ENCODE measurements at regions of chr16 and their contacts with region 1.

Region 1: GRCh38 chr16:35449663-35450062 is 1990.3 kb downstream of the TP53TG3F start:
- DNase-seq: no peak
- H3K4me3 ChIP-seq: no peak overlapping the region
- H3K27ac ChIP-seq: no peak overlapping the region
- H3K27me3 ChIP-seq: no peaks in the 10 kb centered on the region
- CTCF ChIP-seq: no peak

Region 2: GRCh38 chr16:35221482-35222185 is 228.0 kb before region 1 on chr16:
- in situ Hi-C with region 1: no loop called
- DNase-seq: no peak
- H3K4me3 ChIP-seq: no peak overlapping the region
- H3K27ac ChIP-seq: no peak overlapping the region
- H3K27me3 ChIP-seq: no peaks in the 10 kb centered on the region
- CTCF ChIP-seq: no peak

Region 3: DNA sequence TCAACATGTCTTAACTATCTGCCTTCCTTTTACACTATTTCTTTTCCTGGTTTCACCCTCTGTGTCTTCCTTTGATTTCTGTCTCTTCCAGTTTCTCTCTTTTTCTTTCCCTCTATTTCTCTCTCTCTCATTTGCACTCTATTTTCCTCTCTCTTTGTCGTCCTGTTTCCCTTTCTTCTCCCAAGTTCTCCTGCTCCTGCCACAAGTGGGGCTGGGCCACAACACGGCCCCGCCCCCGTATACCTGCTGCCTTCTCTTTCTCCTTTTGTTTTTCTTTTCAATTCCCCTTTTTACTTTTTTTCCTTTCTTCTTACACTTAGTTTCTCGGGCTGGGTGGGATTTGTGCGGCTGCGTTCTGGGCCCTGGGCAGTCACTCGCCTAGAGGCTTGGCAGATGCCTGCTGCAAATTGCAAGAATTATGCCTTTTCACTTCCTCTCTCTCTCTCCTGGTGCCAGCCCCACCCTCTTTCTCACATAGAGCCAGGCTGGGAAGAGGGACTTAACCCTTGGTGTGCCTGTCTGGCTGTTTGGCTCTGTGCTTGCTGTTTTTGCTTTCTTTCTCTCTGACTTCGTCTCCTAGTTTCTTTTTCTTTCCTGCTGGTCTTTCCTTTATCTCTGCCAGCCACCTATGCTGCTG is 149.2 kb after region 1 on chr16:
- in situ Hi-C with region 1: loop called (anchors 25 kb)
- DNase-seq: no peak
- H3K4me3 ChIP-seq: no peak overlapping the region
- H3K27ac ChIP-seq: no peak overlapping the region
- H3K27me3 ChIP-seq: no peaks in the 10 kb centered on the region
- CTCF ChIP-seq: no peak

Region 4: DNA sequence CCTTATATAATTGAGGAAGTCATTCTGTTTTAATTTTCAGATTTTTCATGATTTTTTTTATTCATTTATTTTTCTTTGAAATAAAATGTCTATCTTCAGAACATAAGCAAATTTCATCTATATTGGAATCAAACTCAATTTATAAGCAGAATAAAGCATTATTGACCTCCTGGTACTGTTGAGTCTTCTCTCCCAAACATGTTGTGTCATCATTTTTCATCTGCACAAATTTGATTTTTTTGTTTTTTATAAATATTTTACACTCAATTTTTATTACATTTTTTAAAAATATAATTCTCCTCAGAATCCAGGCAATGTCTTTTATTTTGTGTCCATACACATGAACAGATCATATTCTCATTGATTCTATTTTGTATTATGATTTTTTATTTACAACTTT is 373.7 kb after region 1 on chr16:
- in situ Hi-C with region 1: no loop called
- DNase-seq: no peak
- H3K4me3 ChIP-seq: no peak overlapping the region
- H3K27ac ChIP-seq: no peak overlapping the region
- H3K27me3 ChIP-seq: no peaks in the 10 kb centered on the region
- CTCF ChIP-seq: no peak

Measured in brain microvascular endothelial cell (primary cell).